Gastrocnemius medialis (tissue), 4 donors: ENCODE measurements at regions of chr17 and their contacts with region 1.

Region 1: DNA sequence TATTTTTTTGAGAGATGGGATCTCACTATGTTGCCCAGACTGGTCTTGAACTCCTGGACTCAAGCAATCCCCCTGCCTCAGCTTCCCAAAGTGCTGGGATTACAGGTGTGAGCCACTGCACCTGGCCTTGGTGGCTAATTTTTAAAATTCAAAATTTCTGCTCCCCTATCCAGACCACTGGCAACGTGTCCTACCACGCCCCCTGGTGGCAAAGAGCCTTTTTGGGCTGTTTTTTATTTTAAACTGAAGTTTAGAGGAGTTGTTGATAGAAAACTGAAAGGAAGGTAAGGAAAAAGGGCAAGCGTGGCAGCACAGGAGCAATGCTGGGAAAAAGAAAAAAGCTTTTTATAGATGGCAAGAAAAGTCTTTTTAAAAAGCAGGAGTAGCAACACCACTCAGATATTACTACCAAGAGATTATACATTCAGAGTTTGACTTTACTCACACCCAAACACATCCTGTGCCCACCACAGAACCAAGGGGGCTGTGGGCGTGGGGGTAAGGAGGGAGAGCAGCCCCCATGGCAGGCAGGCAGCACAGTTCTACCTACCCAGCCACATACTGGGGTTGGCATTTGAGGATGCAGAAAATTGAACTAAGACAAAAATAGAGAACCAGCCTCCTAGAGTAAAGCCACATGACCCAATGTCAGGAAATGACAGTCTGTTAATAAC is 4.2 kb upstream of the MXRA7 start:
- DNase-seq: peak; percentile 19 to 37
- ATAC-seq: no peak
- H3K4me3 ChIP-seq: no peak overlapping the region
- H3K27ac ChIP-seq: peak overlapping the region; percentile 66 to 84 (median 73)
- H3K4me1 ChIP-seq: peaks cover 30 to 33% of the 10 kb centered on the region in 2 donors
- H3K27me3 ChIP-seq: no peaks in the 10 kb centered on the region
- CTCF ChIP-seq: peak; percentile 57 to 84 (median 81)
- POLR2A ChIP-seq: no peak

Region 2: DNA sequence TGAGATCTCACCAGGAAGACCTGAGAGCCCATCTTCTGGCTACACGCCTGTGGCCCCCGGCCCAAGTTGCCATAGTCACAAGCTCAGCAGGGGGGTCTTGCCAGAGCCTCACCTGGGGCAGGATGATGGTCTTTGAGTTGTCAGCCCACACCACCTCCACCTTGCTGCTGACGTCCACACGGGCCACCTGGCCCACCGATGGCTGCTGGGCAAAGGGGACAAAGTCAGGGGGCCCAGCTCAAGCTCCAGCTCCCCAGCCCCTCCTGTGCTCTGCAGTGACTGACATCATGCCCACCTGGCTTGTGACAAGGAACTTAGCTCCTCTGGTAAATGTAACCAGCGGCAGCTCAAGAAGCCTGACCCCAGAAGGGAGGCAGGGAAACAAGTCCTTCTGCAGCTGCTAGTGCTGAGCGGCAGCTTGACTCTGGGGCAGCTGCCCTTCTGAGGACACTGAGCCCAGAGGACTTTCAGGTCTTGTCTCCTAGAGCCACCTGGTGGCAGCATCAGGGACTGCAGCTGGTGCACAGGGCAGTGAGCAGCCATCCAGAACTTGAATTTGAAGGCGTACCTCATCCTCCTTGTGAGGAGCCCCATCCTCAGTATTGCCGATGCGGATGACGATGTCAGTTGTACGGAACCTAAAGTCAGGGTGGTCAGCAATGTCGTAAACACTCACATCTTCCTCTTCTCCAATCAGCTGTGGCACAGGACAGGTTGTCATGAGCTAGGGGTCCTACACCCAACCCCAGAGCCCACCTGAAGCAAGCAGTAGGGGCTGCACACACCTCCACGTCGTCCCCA is 317.1 kb before region 1 on chr17:
- in situ Hi-C with region 1: no loop called
- intact Hi-C with region 1: no loop called
- DNase-seq: peak; percentile 69 to 85
- ATAC-seq: peak; percentile 87 to 95
- H3K4me3 ChIP-seq: no peak overlapping the region
- H3K27ac ChIP-seq: peak overlapping the region in 2 of 4 donors; percentile 30 to 31
- H3K4me1 ChIP-seq: peaks cover 0 to 5% of the 10 kb centered on the region in 2 donors
- H3K27me3 ChIP-seq: no peaks in the 10 kb centered on the region
- CTCF ChIP-seq: peak; percentile 96 to 98 (median 97)
- POLR2A ChIP-seq: no peak

Region 3: DNA sequence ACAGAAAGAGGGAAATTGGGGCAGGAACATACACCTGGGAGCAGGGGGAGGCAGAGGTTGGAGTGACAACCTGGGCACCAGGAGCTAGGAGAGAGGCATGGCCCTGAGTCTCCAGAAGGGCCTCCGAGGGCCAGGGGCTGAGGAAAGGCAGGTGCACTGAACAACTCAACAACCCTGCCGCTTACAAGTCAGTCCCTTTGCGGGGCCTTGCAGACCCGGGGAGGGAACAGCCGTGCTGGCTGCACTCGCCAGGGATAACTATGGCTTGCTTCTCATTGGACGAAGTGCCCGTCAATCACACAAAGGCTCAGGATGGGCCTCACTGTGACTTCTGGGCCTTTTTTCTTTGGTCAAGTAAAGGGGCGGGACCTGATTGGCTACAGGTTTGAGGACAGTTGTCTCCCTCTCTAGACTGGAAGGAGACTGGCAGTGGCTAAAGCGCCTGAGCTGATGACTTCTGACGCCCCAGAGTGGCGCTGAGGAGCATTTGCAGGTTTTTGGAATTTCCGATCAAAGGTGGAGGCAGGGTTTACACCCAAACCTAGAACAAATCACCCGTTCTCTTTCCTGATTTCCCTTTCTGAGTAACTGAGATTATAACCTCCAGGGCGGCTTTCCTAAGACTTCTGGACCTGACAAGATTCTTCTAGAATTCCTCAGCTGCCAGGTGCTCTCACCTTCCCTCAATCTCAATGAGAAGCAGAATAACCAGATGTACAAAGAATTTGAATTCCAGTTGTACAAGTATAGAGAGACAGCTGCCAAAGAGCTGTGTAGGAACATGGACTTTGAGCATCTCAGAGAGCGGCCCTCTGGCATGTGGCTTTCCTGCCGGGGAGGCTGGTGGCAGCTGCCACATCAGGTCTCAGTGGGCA is 101.7 kb before region 1 on chr17:
- in situ Hi-C with region 1: no loop called
- intact Hi-C with region 1: no loop called
- DNase-seq: no peak
- ATAC-seq: no peak
- H3K4me3 ChIP-seq: no peak overlapping the region
- H3K27ac ChIP-seq: no peak overlapping the region
- H3K4me1 ChIP-seq: no peaks in the 10 kb centered on the region
- H3K27me3 ChIP-seq: no peaks in the 10 kb centered on the region
- CTCF ChIP-seq: no peak
- POLR2A ChIP-seq: no peak

Region 4: GRCh38 chr17:76687308-76688164 is 27.4 kb before region 1 on chr17:
- in situ Hi-C with region 1: no loop called
- intact Hi-C with region 1: loop called (anchors 1 kb)
- DNase-seq: peak in 1 of 2 donors; percentile 71
- ATAC-seq: peak; percentile 17 to 58
- H3K4me3 ChIP-seq: no peak overlapping the region
- H3K27ac ChIP-seq: peak overlapping the region; percentile 70 to 83 (median 71)
- H3K4me1 ChIP-seq: peaks cover 36 to 48% of the 10 kb centered on the region in 2 donors
- H3K27me3 ChIP-seq: no peaks in the 10 kb centered on the region
- CTCF ChIP-seq: no peak
- POLR2A ChIP-seq: no peak

Region 5: DNA sequence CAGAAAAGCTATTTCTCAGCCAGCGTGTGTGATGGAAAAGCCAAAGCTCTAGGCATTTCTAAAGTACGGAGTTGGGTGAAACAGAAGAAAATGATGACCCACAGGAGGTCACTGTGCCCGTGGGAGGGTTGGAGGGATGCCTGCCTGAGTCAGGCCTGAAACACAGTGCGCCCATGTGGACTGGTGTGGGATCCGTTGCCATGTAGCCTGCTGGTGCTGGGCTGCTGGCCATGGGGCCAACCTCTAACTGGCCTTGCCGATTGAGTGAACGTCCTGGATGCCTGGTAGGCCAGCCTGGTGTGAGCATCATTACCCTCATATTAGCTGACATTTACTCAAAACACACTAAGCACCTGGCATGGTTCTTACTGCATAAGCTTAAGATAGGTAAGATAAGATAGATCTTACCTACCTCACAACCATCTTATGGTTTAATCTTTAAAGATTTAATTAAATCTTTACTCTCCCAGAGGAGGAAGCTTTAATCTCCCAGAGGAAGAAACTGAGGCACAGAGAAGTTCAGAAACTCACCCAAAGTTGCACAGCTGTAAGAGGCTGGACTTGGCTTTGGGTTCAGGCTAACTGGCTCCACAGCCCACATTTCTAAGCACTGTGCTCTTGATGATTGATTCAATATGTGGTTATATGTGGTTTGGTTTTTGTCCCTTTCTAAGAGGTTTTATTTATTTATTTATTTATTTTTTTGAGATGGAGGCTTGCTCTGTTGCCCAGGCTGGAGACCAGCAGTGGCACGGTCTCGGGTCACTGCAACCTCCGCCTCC is 169.0 kb after region 1 on chr17:
- in situ Hi-C with region 1: no loop called
- intact Hi-C with region 1: no loop called
- DNase-seq: no peak
- ATAC-seq: no peak
- H3K4me3 ChIP-seq: no peak overlapping the region
- H3K27ac ChIP-seq: no peak overlapping the region
- H3K4me1 ChIP-seq: no peaks in the 10 kb centered on the region
- H3K27me3 ChIP-seq: peaks cover 0 to 10% (median 3%) of the 10 kb centered on the region in 3 donors
- CTCF ChIP-seq: no peak
- POLR2A ChIP-seq: no peak